Pancreas (tissue), 10 donors: ENCODE measurements at regions of chr3 and their contacts with region 1.

Region 1: DNA sequence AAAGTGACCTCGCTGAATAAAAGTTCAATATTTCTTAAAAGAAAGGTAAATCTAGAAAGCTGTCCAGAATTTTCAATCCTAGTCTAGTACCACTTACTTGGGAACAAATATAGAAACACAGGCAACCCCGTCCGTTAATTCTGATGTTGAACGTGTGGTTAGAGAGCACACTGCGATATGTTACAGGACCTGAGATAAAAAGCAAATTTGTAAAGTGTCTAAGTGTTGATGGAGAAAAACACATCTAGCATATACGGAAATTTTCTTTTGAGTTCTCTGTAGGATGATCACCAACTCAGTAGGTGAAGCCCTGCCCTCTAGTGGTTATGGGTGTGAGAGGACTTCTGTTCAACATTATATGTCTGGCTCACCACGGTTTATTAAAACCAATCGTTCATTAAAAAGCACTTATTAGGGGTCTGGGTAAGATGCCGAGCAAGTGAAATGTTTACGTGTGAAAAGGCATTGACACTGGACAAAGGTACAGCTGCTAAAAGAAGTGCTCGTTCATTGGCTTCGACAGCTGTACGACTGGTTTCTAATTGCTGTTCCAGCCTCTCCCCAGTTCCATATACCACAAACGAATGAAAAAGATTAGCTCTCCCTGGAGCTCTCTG is 1.0 kb upstream of the ATP2C1 start:
- DNase-seq: peak in 3 of 6 donors; percentile 57 to 81 (median 70)
- ATAC-seq: peak; percentile 69 to 86 (median 78)
- H3K4me3 ChIP-seq: peak overlapping the region; percentile 68 to 76 (median 74)
- H3K27ac ChIP-seq: peak overlapping the region; percentile 95 to 98 (median 96)
- H3K4me1 ChIP-seq: peaks cover 0 to 16% (median 5%) of the 10 kb centered on the region in 3 donors
- H3K27me3 ChIP-seq: no peaks in the 10 kb centered on the region
- CTCF ChIP-seq: peak in 3 of 4 donors; percentile 49 to 76 (median 68)

Region 2: GRCh38 chr3:130759699-130760338 is 133.0 kb before region 1 on chr3:
- intact Hi-C with region 1: loop called in 2 of 3 experiments (anchors 5 to 10 kb)
- DNase-seq: peak in 3 of 6 donors; percentile 23 to 53 (median 37)
- ATAC-seq: peak; percentile 82 to 97 (median 92)
- H3K4me3 ChIP-seq: no peak overlapping the region
- H3K27ac ChIP-seq: no peak overlapping the region
- H3K4me1 ChIP-seq: no peaks in the 10 kb centered on the region
- H3K27me3 ChIP-seq: no peaks in the 10 kb centered on the region
- CTCF ChIP-seq: peak; percentile 53 to 79 (median 72)